ENCODE measurements at regions of chr9 and their contacts with region 1.

Region 1: DNA sequence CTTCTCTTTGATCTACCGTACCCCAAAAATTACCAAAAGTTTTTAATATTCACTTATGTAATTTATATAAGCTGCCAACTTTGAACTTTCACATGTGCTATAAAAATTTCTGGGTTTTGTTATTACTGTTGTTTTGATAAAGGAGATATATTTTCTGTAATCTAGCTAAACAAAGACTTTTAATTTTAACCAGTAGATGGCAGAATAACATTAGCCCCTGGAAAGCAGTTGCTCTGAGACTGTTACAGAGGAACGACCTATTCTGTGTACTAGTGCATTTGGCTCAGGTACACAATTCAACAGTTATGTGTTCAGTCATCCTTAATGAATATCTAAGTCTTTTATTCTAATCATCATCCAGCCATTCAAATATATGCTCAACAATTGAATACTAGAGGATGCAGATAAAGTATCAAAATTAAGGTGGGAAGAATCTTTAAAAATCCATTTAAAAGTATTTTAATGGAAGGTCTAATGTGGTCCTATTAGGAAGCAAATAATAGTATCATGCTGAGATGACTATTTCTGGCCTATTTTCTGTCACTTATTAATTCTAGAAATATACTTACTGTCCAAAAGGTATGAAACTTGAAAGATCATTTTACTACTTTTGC is 8.6 kb downstream of the KLHL9 start:
- DNase-seq: no peak
- H3K4me3 ChIP-seq: no peak overlapping the region
- CTCF ChIP-seq: peak; percentile 34

Region 2: GRCh38 chr9:21434202-21435014 is 107.8 kb after region 1 on chr9:
- CTCF ChIA-PET with region 1: interaction called, 16 read pairs
- POLR2A ChIA-PET with region 1: no interaction called
- DNase-seq: peak; percentile 23
- H3K4me3 ChIP-seq: no peak overlapping the region
- CTCF ChIP-seq: peak; percentile 53

Region 3: DNA sequence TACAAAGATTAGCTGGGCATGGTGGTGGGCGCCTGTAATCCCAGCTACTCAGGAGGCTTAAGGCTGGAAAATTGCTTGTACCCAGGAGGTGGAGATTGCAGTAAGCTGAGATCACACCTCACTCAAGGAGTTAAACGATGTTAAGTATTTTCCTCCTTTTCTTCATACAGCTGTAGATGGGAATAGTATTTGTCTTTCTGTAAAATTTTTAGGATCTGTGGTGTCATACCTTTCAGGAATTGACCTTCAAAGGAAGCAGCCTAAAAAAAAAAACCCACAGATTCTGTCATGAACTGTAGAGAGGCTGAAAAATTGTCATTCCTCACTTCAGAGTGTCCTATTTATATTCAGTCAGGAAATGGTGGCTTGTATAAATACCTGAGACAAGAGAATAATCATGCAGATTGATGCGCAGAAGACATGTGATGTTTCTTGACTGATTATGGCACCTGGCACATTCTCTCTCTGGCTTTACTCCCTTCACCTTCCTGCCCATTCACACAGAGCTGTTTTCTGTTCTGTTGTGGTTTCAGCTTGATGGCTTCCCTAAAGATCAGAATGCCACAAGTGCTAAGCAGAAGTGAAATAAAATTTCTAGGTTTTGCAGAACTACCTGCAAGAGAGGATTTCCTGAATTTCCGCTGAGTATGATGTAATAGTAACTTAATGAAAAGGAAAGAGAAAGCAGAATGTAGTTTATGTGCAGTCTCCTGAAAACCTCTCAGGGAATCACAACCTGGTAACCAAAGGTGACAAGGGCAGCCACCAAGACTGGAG is 117.4 kb after region 1 on chr9:
- CTCF ChIA-PET with region 1: interaction called, 13 read pairs
- POLR2A ChIA-PET with region 1: no interaction called
- DNase-seq: no peak
- H3K4me3 ChIP-seq: no peak overlapping the region
- CTCF ChIP-seq: no peak

Region 4: DNA sequence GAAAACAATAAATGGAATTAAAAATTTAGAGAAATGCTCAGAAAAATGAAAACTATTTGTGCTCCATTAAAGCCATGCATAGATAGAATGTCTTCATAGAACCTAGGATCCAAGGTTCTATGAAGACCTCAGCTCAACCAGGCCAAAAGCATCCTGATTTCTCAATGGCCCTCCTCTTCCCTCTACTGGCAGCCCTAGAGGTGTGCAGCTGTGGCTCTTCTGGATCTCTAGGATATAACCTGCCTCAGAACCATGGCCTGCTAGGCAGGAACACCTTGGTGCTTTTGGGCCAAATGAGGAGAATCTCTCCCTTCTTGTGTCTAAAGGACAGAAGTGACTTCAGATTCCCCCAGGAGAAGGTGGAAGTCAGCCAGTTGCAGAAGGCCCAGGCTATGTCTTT is 128.7 kb after region 1 on chr9:
- CTCF ChIA-PET with region 1: interaction called, 33 read pairs
- POLR2A ChIA-PET with region 1: no interaction called
- DNase-seq: no peak
- H3K4me3 ChIP-seq: no peak overlapping the region
- CTCF ChIP-seq: peak; percentile 66

Region 5: DNA sequence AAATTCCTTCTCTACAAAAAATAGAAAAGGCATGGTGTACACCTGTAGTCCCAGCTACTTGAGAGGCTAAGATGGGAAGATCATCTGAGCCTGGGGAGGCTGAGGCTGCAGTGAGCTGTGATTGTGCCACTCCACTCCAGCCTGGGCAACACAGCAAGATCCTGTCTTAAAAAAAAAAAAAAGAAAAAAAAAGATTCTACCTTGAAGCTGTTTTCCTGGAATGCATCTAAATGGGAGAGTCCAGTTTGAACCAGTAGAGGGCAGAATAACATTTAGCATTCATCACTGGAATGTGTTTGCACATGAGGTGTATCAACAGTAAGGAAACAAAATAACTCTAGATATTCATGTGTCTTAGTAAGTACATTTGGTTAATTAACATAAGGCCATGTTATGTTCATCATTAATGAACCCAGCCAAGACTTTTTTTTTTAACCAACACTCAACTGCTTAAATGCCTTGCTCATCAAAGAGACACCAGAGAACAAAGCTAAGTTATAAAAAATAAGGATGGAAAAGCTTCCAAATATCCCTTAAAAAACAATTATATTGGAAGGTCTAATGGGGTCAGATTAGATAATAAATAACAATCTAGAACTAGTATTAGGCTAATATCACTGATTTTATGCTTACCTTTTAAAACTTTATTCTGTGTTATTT is 139.4 kb after region 1 on chr9:
- CTCF ChIA-PET with region 1: interaction called, 14 read pairs
- POLR2A ChIA-PET with region 1: no interaction called
- DNase-seq: no peak
- H3K4me3 ChIP-seq: no peak overlapping the region
- CTCF ChIP-seq: peak; percentile 51

Measured in AG04449 (cell line).